ENCODE measurements at regions of chr6 and their contacts with region 1.

Region 1: DNA sequence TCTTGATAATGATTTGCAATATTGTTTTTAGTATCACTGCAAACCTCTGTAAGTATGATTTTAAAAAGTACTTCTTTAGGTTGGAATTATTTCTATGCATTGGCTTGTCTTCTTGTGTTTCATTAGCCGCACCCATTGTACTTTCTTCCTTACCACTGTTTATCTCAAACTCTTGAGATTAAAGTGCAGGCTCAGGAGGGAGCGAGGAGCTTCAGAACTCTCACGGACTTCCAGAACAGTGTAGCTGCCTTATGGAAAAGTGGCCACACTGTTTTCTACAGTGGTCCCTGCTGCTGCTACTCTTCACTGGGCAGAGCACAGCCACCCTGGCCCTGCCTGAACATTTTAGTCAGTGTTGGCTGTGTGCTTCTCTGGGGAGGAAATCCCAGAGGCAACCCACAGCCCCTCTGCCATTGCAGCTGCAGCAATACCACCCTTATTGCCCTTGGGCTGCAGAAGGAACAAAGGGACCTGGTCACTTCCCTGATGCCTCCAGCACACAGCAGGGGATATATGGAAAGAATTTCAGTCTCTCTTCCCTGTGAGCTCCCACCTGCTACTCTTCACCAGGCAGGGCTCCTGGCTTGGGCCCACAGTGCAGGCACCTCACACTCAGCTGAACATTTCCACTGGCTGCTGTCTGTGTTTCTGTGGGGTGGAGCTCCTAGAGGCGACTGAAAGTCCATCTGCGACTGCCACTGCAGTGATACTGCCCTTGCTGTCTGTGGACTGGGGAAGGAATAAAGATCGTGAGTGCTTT is 91.7 kb upstream of the MAP3K4 start:
- DNase-seq: no peak
- H3K4me3 ChIP-seq: no peak overlapping the region
- H3K27ac ChIP-seq: no peak overlapping the region
- H3K4me1 ChIP-seq: no peaks in the 10 kb centered on the region
- H3K27me3 ChIP-seq: no peaks in the 10 kb centered on the region
- CTCF ChIP-seq: no peak
- EP300 ChIP-seq: no peak
- POLR2A ChIP-seq: no peak

Region 2: GRCh38 chr6:160859822-160860221 is 40.0 kb before region 1 on chr6:
- in situ Hi-C with region 1: no loop called
- intact Hi-C with region 1: loop called (anchors 1 kb)
- DNase-seq: no peak
- H3K4me3 ChIP-seq: no peak overlapping the region
- H3K27ac ChIP-seq: no peak overlapping the region
- H3K4me1 ChIP-seq: no peaks in the 10 kb centered on the region
- H3K27me3 ChIP-seq: no peaks in the 10 kb centered on the region
- CTCF ChIP-seq: no peak
- EP300 ChIP-seq: no peak
- POLR2A ChIP-seq: no peak

Region 3: DNA sequence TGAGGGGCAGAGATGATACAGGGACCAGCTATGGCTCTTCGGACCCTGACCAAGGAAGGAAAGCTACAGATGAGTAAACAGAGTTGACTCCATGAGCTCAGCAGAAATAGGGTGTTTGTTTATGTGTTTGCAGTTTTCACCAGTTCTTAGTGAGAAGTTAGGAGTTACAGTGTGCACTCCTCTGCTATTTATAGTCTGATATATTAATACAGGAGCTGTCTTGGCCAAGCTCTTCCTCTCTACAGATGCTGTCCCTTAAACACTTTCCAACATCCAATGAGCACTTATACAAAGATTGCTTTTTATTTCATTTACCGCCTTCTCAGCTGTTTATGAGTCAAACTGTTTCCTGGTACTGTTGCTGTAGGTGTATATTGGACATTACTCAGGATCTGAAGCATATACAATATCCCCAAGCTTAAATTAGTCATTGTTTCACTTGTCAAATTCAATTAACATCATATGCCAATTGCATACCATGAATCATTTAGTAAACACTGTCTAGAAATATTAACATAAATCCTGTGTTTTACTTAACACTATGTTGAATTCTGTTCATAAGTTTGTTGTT is 1209.7 kb after region 1 on chr6:
- in situ Hi-C with region 1: no loop called
- intact Hi-C with region 1: no loop called
- DNase-seq: no peak
- H3K4me3 ChIP-seq: no peak overlapping the region
- H3K27ac ChIP-seq: no peak overlapping the region
- H3K4me1 ChIP-seq: no peaks in the 10 kb centered on the region
- H3K27me3 ChIP-seq: no peaks in the 10 kb centered on the region
- CTCF ChIP-seq: no peak
- EP300 ChIP-seq: no peak
- POLR2A ChIP-seq: no peak

Measured in transverse colon (tissue), 4 donors.